ENCODE measurements at regions of chr5 and their contacts with region 1.

Region 1: GRCh38 chr5:138575194-138576015 is at the start of gene HSPA9:
- DNase-seq: peak; percentile 99
- ATAC-seq: peak; percentile 87
- H3K4me3 ChIP-seq: peak within 1 kb of the TSS; percentile 88 to 100
- H3K27ac ChIP-seq: peak within 1 kb of the TSS; percentile 96
- H3K4me1 ChIP-seq: peaks cover 10 to 29% of the 10 kb centered on the region in 2 experiments; a peak in 3 of 4 replicates
- H3K27me3 ChIP-seq: no peaks in the 10 kb centered on the region
- CTCF ChIP-seq: no peak
- POLR2A ChIP-seq: no peak
- RAD21 ChIP-seq: no peak
- total RNA-seq, gene HSPA9: 486 TPM

Region 2: DNA sequence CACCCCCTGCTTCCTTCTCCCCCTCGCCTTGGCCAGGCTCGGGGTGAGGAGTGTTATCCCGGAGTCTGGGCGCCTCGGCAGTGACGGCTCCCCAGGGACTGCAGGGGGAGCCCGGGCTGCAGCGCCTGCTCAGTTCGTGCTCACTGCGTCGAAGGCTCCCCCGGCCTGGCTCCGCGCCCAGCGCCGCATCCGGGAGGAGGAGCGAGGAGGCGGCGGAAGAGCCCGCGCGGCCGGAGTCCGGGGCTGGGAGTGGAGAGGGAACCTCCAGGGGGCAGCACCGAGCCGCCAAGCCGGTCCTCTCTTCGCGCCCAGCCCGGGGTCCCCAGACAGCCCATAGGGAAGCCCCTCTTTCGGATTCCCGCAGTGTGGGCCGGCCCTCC is 111.4 kb before region 1 on chr5:
- CTCF ChIA-PET with region 1: no interaction called
- POLR2A ChIA-PET with region 1: interaction called, 10 read pairs
- RAD21 ChIA-PET with region 1: no interaction called
- intact Hi-C with region 1: no loop called
- DNase-seq: peak; percentile 81
- ATAC-seq: peak; percentile 52
- H3K4me3 ChIP-seq: peak overlapping the region; percentile 53 to 82
- H3K27ac ChIP-seq: peak overlapping the region; percentile 88
- H3K4me1 ChIP-seq: peaks cover 0 to 40% of the 10 kb centered on the region in 2 experiments; a peak in 3 of 4 replicates
- H3K27me3 ChIP-seq: no peaks in the 10 kb centered on the region
- CTCF ChIP-seq: peak in 2 of 3 experiments; percentile 77 to 83; a peak in 4 of 6 replicates
- POLR2A ChIP-seq: peak; percentile 33
- RAD21 ChIP-seq: no peak

Region 3: GRCh38 chr5:138542956-138543729 is 32.3 kb before region 1 on chr5 and contains the start of gene ETF1:
- CTCF ChIA-PET with region 1: interaction called, 5 read pairs
- POLR2A ChIA-PET with region 1: interaction called, 10 read pairs
- RAD21 ChIA-PET with region 1: no interaction called
- intact Hi-C with region 1: loop called (anchors 1 kb)
- DNase-seq: peak; percentile 97
- ATAC-seq: peak; percentile 88
- H3K4me3 ChIP-seq: peak within 1 kb of the TSS; percentile 84 to 97
- H3K27ac ChIP-seq: peak within 1 kb of the TSS; percentile 78
- H3K4me1 ChIP-seq: peaks cover 19 to 50% of the 10 kb centered on the region in 2 experiments; a peak in 3 of 4 replicates
- H3K27me3 ChIP-seq: no peaks in the 10 kb centered on the region
- CTCF ChIP-seq: no peak
- POLR2A ChIP-seq: peak; percentile 18
- RAD21 ChIP-seq: no peak
- total RNA-seq, gene ETF1: 178 TPM

Region 4: DNA sequence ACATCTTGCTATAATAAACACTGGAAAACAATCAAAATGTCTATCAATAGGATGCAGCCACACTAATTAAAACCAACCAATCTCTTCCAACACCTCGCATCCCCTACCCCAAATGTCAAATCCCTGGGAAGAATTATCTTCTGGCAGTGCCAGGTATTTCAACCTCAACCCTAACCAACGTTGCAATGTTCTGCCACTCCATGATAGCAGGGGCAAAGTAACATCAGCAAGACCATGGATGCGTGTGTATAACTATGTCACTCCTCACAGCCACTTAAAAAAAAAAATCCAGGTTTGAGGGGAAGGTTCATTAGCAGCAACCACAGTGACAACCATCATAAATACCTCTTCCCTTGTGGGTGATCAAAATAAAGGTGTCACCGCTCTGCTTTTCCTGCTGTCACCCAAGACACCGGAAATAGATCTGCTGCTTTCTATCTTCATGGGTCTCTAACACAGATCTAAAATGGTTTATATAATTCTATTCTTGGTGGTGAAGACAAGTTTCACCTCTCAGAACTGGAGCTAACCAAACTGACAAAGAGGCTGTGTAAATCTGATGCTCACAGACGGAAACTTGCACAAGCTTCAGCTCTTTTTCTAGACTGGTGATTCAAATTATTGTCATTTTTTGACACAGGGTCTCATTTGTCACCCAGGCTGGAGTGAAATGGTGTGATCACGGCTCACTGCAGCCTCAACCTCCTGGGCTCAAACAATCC is 10.1 kb before region 1 on chr5:
- CTCF ChIA-PET with region 1: no interaction called
- POLR2A ChIA-PET with region 1: interaction called, 11 read pairs
- RAD21 ChIA-PET with region 1: no interaction called
- intact Hi-C with region 1: no loop called
- DNase-seq: no peak
- ATAC-seq: no peak
- H3K4me3 ChIP-seq: no peak overlapping the region
- H3K27ac ChIP-seq: no peak overlapping the region
- H3K4me1 ChIP-seq: no peaks in the 10 kb centered on the region
- H3K27me3 ChIP-seq: no peaks in the 10 kb centered on the region
- CTCF ChIP-seq: no peak
- POLR2A ChIP-seq: no peak
- RAD21 ChIP-seq: no peak

Region 5: GRCh38 chr5:138752951-138753793 is 177.8 kb after region 1 on chr5 and contains the start of gene CTNNA1:
- CTCF ChIA-PET with region 1: no interaction called
- POLR2A ChIA-PET with region 1: no interaction called
- RAD21 ChIA-PET with region 1: no interaction called
- intact Hi-C with region 1: loop called (anchors 1 kb)
- DNase-seq: peak; percentile 71
- ATAC-seq: peak; percentile 74
- H3K4me3 ChIP-seq: peak within 1 kb of the TSS; percentile 82 to 95
- H3K27ac ChIP-seq: peak within 1 kb of the TSS; percentile 98
- H3K4me1 ChIP-seq: peaks cover 29 to 50% of the 10 kb centered on the region in 2 experiments
- H3K27me3 ChIP-seq: no peaks in the 10 kb centered on the region
- CTCF ChIP-seq: no peak
- POLR2A ChIP-seq: peak; percentile 47
- RAD21 ChIP-seq: no peak
- total RNA-seq, gene CTNNA1: 313 TPM

Region 6: GRCh38 chr5:138874771-138875551 is 299.6 kb after region 1 on chr5 and contains the start of gene LRRTM2:
- CTCF ChIA-PET with region 1: no interaction called
- POLR2A ChIA-PET with region 1: no interaction called
- RAD21 ChIA-PET with region 1: no interaction called
- intact Hi-C with region 1: no loop called
- DNase-seq: no peak
- ATAC-seq: no peak
- H3K4me3 ChIP-seq: no peak within 1 kb of the TSS
- H3K27ac ChIP-seq: no peak within 1 kb of the TSS
- H3K4me1 ChIP-seq: peaks cover 13 to 15% of the 10 kb centered on the region in 2 experiments
- H3K27me3 ChIP-seq: no peaks in the 10 kb centered on the region
- CTCF ChIP-seq: no peak
- POLR2A ChIP-seq: no peak
- RAD21 ChIP-seq: no peak
- total RNA-seq, gene LRRTM2: not detected

Region 7: GRCh38 chr5:139262742-139263445 is 687.5 kb after region 1 on chr5:
- CTCF ChIA-PET with region 1: interaction called, 6 read pairs
- POLR2A ChIA-PET with region 1: no interaction called
- RAD21 ChIA-PET with region 1: interaction called in 1 of 2 experiments, 4 read pairs
- intact Hi-C with region 1: loop called (anchors 1 kb)
- DNase-seq: peak; percentile 83
- ATAC-seq: peak; percentile 99
- H3K4me3 ChIP-seq: no peak overlapping the region
- H3K27ac ChIP-seq: no peak overlapping the region
- H3K4me1 ChIP-seq: peaks cover 0 to 11% of the 10 kb centered on the region in 2 experiments; a peak in 3 of 4 replicates
- H3K27me3 ChIP-seq: no peaks in the 10 kb centered on the region
- CTCF ChIP-seq: peak; percentile 85 to 94 (median 86)
- POLR2A ChIP-seq: no peak
- RAD21 ChIP-seq: peak; percentile 99

Region 8: DNA sequence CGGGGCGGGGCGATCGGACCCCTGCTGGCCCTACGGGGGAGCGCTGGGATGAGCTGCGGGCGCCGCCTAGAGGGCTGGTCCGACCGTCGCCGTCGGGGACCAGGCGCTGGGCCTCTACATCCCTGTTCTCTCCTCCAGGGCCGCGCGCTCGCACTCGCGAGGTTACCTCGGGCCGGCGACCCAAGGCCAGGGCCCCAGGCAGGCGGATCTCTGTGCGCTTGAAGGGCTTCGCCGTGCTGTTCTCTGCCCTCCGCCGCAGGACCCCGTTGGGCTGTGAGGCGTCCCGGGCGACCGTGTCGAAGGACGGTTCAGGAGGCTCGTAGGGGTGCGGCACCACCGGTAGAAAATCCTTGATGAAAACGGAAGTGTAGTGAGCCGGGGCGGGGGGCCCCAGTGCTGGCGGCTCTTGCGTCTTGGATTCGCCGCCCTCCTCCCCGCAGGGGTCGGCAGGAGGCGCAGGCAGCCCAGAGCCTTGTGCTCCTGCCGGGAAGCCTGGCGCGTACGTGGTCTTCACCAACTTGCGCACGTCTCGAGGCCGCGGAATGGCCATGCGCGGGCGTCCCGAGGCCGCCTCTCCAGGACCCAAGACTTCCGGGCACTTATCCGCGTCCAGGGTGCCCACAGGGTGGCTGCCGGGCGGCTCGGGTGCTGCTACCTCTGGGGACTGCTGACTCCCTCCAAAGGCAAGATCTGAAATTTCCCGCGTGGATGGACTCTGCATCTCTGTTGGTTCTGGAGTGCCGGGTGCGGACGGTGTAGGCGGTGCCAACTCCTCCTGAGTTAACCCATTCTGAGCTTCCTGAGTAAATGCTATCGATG is 817.5 kb after region 1 on chr5:
- CTCF ChIA-PET with region 1: no interaction called
- POLR2A ChIA-PET with region 1: no interaction called
- RAD21 ChIA-PET with region 1: no interaction called
- intact Hi-C with region 1: loop called (anchors 5 kb)
- DNase-seq: peak; percentile 66
- ATAC-seq: peak; percentile 82
- H3K4me3 ChIP-seq: peak overlapping the region; percentile 65 to 79
- H3K27ac ChIP-seq: peak overlapping the region; percentile 82
- H3K4me1 ChIP-seq: peaks cover 15 to 56% of the 10 kb centered on the region in 2 experiments
- H3K27me3 ChIP-seq: no peaks in the 10 kb centered on the region
- CTCF ChIP-seq: peak in 2 of 3 experiments; percentile 76 to 81; a peak in 4 of 6 replicates
- POLR2A ChIP-seq: peak; percentile 16
- RAD21 ChIP-seq: no peak